CD4-positive, alpha-beta memory T cell (primary cell): ENCODE measurements at regions of chr11 and their contacts with region 1.

Region 1: DNA sequence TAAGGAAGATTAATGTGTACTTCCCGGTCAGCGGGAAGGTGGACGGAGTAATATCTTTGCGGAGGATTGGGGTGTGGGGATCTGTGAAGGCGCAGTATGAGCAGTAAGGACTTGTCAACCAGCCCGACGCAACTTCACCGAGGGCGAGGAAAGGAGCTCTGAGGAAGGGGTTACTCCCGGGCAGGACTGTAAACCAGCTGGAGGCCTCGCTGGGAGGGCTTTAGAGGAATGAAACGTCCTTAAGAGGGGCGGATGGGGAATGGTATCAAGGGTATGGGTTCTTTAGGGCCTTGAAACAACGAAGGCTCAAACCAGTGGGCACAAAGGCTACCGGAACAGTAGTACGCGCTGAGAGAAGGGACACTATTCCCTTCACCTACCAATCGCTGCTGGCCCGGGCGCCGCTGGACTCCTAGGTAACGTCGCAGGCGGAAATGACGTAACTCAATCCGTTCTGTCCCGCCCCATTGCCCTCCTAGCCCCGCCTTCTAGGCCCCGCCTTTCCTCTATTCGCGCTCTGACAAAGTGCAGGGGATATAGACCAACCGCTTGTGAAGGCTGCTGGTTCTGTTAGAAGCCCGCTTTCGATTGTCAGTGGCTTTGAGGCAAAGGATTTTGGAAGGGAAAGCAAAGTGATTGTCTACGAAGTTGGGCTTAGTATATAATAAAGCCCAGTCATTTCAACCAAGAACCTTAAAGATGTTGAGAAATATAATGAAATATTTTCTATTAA is at the start of gene C11orf65:
- DNase-seq: peak; percentile 96 to 97 (median 97)
- H3K4me3 ChIP-seq: peak within 1 kb of the TSS; percentile 40 to 94
- H3K4me3 Mint-ChIP-seq: peak within 1 kb of the TSS; percentile 96 to 100 (median 97)
- H3K27ac ChIP-seq: peak within 1 kb of the TSS; percentile 95
- H3K27ac Mint-ChIP-seq: peak within 1 kb of the TSS; percentile 97 to 100 (median 100)
- H3K4me1 ChIP-seq: peaks cover 8% of the 10 kb centered on the region
- H3K4me1 Mint-ChIP-seq: peaks cover 5 to 16% (median 9%) of the 10 kb centered on the region in 4 donors
- H3K27me3 ChIP-seq: no peaks in the 10 kb centered on the region
- H3K27me3 Mint-ChIP-seq: no peaks in the 10 kb centered on the region
- total RNA-seq, gene C11orf65: 0.30 to 0.93 TPM

Region 2: DNA sequence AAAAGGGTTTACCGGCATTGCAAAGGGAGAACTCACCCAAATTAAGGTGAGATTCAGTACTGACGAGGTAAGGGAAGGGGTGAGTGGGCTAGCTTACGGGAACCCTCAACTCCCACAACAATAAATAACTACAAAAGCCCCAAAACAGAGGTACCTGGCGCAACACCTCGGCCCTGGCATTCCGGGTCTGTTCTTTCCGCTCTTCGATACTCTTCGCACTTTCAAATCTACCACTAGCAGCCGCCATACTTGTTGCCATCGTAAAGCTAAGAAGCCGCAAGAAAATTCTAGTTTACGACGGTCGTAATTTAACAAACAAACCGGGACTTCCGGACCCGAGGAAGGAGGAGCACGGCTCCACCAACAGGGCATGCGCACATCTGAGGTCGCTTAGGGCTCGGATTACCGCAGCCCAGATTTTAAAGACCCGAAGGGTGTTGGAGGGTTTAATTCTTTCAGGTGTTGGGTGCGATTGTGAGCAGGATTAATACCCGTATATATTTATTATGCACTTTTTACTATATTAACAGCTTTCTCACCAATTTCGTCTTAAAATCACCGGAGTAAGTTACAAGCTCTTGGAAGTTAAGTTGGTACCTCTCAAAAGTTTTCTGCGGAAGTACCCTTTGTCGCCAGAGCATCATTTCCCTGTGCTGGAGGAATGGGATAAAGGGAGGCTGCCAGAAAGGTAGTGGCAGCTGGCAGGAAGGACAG is 1009.5 kb before region 1 on chr11 and contains the start of gene CWF19L2:
- CTCF ChIA-PET with region 1: no interaction called
- POLR2A ChIA-PET with region 1: no interaction called
- intact Hi-C with region 1: loop called (anchors 10 kb)
- DNase-seq: peak; percentile 90 to 94 (median 93)
- H3K4me3 ChIP-seq: peak within 1 kb of the TSS; percentile 78 to 90
- H3K4me3 Mint-ChIP-seq: peak within 1 kb of the TSS; percentile 91 to 97 (median 94)
- H3K27ac ChIP-seq: peak within 1 kb of the TSS; percentile 81
- H3K27ac Mint-ChIP-seq: peak within 1 kb of the TSS; percentile 80 to 97 (median 95)
- H3K4me1 ChIP-seq: peaks cover 16% of the 10 kb centered on the region
- H3K4me1 Mint-ChIP-seq: peaks cover 22 to 31% (median 25%) of the 10 kb centered on the region in 4 donors
- H3K27me3 ChIP-seq: no peaks in the 10 kb centered on the region
- H3K27me3 Mint-ChIP-seq: no peaks in the 10 kb centered on the region
- total RNA-seq, gene CWF19L2: 34.8 to 38.8 TPM

Region 3: DNA sequence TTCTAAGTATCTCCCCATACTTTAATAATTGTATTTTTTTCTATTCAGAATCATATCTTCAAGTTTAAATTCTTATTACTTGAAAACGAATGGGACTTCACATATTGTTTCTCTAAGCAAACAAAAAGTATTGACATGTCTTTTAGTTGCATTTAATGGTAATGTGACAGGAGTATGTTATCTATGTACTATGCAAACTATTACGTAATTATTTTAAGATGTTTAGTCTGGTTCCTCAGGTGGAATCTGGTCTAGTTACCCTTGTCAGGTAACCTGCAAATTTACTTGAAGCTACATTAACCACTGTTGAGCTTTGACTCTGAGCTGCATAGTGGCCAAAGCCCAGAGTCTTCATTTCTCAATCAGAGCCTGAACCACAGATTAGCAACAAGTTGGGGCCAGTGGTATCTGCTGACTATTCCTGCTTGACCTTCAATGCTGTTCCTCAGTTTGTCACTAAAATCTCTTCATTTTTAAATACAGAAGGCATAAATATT is 133.8 kb before region 1 on chr11:
- CTCF ChIA-PET with region 1: no interaction called
- POLR2A ChIA-PET with region 1: no interaction called
- intact Hi-C with region 1: no loop called
- DNase-seq: no peak
- H3K4me3 ChIP-seq: no peak overlapping the region
- H3K4me3 Mint-ChIP-seq: no peak overlapping the region
- H3K27ac ChIP-seq: no peak overlapping the region
- H3K27ac Mint-ChIP-seq: no peak overlapping the region
- H3K4me1 ChIP-seq: no peaks in the 10 kb centered on the region
- H3K4me1 Mint-ChIP-seq: peaks cover 0 to 4% (median 2%) of the 10 kb centered on the region in 4 donors
- H3K27me3 ChIP-seq: no peaks in the 10 kb centered on the region
- H3K27me3 Mint-ChIP-seq: no peaks in the 10 kb centered on the region

Region 4: GRCh38 chr11:108435066-108435465 is 32.2 kb before region 1 on chr11:
- CTCF ChIA-PET with region 1: no interaction called
- POLR2A ChIA-PET with region 1: no interaction called
- intact Hi-C with region 1: no loop called
- DNase-seq: no peak
- H3K4me3 ChIP-seq: no peak overlapping the region
- H3K4me3 Mint-ChIP-seq: no peak overlapping the region
- H3K27ac ChIP-seq: no peak overlapping the region
- H3K27ac Mint-ChIP-seq: no peak overlapping the region
- H3K4me1 ChIP-seq: no peaks in the 10 kb centered on the region
- H3K4me1 Mint-ChIP-seq: no peaks in the 10 kb centered on the region
- H3K27me3 ChIP-seq: no peaks in the 10 kb centered on the region
- H3K27me3 Mint-ChIP-seq: peaks cover 0 to 4% of the 10 kb centered on the region in 2 donors

Region 5: GRCh38 chr11:108497317-108498045 is 30.2 kb after region 1 on chr11:
- CTCF ChIA-PET with region 1: no interaction called
- POLR2A ChIA-PET with region 1: interaction called, 43 read pairs
- intact Hi-C with region 1: loop called (anchors 1 kb)
- DNase-seq: peak; percentile 73 to 88 (median 77)
- H3K4me3 ChIP-seq: peak overlapping the region; percentile 54 to 77
- H3K4me3 Mint-ChIP-seq: peak overlapping the region; percentile 97 to 100 (median 100)
- H3K27ac ChIP-seq: peak overlapping the region; percentile 90
- H3K27ac Mint-ChIP-seq: peak overlapping the region; percentile 93 to 100 (median 100)
- H3K4me1 ChIP-seq: peaks cover 11% of the 10 kb centered on the region
- H3K4me1 Mint-ChIP-seq: peaks cover 19 to 32% (median 28%) of the 10 kb centered on the region in 4 donors
- H3K27me3 ChIP-seq: no peaks in the 10 kb centered on the region
- H3K27me3 Mint-ChIP-seq: no peaks in the 10 kb centered on the region

Region 6: GRCh38 chr11:108593214-108593922 is 126.1 kb after region 1 on chr11 and contains the start of gene EXPH5:
- CTCF ChIA-PET with region 1: no interaction called
- POLR2A ChIA-PET with region 1: interaction called, 6 read pairs
- intact Hi-C with region 1: loop called (anchors 1 kb)
- DNase-seq: peak; percentile 82 to 89 (median 86)
- H3K4me3 ChIP-seq: peak within 1 kb of the TSS; percentile 83 to 89
- H3K4me3 Mint-ChIP-seq: peak within 1 kb of the TSS; percentile 95 to 100 (median 97)
- H3K27ac ChIP-seq: peak within 1 kb of the TSS; percentile 45
- H3K27ac Mint-ChIP-seq: peak within 1 kb of the TSS; percentile 78 to 99 (median 95)
- H3K4me1 ChIP-seq: peaks cover 9% of the 10 kb centered on the region
- H3K4me1 Mint-ChIP-seq: peaks cover 17 to 23% (median 18%) of the 10 kb centered on the region in 4 donors
- H3K27me3 ChIP-seq: peaks cover 6% of the 10 kb centered on the region
- H3K27me3 Mint-ChIP-seq: peaks cover 2 to 3% of the 10 kb centered on the region in 2 donors
- total RNA-seq, gene EXPH5: 2.6 to 4.0 TPM

Region 7: GRCh38 chr11:108664730-108665525 is 197.7 kb after region 1 on chr11 and contains the start of gene DDX10:
- CTCF ChIA-PET with region 1: interaction called, 4 read pairs
- POLR2A ChIA-PET with region 1: interaction called, 8 read pairs
- intact Hi-C with region 1: loop called (anchors 1 kb)
- DNase-seq: peak; percentile 97 to 99 (median 98)
- H3K4me3 ChIP-seq: peak within 1 kb of the TSS; percentile 66 to 71
- H3K4me3 Mint-ChIP-seq: peak within 1 kb of the TSS; percentile 98 to 100 (median 100)
- H3K27ac ChIP-seq: peak within 1 kb of the TSS; percentile 64
- H3K27ac Mint-ChIP-seq: peak within 1 kb of the TSS; percentile 94 to 100 (median 99)
- H3K4me1 ChIP-seq: peaks cover 32% of the 10 kb centered on the region
- H3K4me1 Mint-ChIP-seq: peaks cover 32 to 56% (median 45%) of the 10 kb centered on the region in 4 donors
- H3K27me3 ChIP-seq: no peaks in the 10 kb centered on the region
- H3K27me3 Mint-ChIP-seq: no peaks in the 10 kb centered on the region
- total RNA-seq, gene DDX10: 17.4 to 18.2 TPM